Ascending aorta (tissue), 2 donors: ENCODE measurements at regions of chr6 and their contacts with region 1.

Region 1: DNA sequence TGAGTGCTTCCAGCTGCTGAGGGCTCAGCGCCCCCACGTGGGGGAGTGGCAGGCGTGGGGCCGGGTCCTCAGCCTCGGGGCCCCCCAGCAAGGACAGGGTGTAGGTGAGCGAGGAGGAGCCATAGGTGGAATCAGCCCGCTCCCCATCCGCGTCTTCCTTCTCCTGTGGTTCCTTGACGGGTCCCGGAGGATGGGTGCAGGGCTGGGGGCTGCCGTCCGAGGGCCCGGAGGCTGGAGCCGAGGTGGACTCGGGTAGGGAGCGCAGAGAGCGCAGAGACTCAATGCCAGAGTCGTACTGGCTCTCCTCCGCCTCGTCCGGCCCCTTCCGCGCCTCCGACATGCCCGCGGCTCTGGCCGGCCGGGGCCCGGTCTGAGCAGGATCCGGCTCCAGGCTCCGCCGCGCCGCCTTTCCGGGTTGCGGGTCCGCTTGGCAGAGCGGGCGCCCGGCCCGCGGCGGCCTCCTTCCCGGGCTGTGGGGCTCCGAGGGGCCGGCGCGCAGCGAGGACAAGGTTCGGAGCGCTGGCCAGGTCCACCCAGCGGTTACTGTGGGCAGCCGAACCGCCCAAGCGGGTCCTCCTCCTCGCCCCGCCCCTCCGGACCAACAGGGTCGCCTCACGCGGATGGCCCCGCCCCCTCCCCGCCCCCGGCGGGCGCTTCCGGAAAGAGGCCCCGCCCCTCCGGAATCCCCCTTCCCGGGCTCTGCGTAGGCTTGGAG is at the start of gene NFKBIE:
- DNase-seq: peak; percentile 88 to 98
- H3K4me3 ChIP-seq: peak within 1 kb of the TSS; percentile 69 to 73
- H3K27ac ChIP-seq: peak within 1 kb of the TSS; percentile 72 to 77
- H3K4me1 ChIP-seq: peaks cover 15 to 29% of the 10 kb centered on the region in 2 donors
- H3K27me3 ChIP-seq: peaks cover 2% of the 10 kb centered on the region
- CTCF ChIP-seq: peak in 1 of 3 experiments; percentile 26
- total RNA-seq, gene NFKBIE: 1.9 TPM

Region 2: DNA sequence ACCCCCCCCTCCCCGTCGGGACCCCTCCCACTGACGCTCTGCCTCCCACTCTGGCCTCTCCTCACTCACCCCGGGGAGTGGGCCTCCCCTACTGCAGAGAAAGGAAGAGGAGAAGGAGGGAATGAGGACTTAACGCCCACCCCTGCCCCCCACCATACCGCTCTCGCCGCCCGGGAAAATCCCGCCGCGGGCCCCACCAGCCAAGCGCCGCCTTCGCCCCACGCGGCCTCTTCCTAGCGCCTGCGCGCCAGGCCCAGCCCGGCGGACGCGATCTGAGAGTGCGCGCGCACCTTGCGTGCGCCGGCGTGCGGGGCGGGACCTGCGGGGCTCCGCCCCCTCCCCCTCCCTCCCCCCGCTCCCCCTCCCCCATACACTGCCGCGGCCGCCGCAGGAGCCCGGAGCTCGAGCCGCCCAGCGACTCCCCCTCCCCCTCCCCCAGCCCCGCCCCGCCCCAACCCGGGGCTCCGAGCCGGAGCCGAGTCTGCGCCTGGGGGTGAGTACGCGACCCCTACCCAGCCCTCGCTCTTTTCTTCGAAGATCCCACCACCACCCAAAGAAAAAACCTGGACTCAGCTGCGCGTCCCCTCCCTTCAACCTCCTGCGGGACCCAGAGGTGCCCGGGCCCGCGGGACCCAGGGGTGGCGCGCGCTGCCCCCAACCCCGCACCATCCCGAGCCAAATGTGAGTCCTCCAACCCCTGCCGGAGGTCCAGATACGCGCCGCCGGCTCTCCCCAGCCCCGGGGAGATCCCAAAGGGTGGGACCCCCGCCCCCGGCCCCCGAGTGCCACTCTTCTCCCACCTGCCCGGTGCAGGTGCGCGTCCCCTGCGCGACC is 137.8 kb before region 1 on chr6 and contains the starts of genes MRPL14 and TMEM63B:
- intact Hi-C with region 1: loop called (anchors 1 kb)
- DNase-seq: peak; percentile 43 to 91
- H3K4me3 ChIP-seq: peak within 1 kb of the TSS; percentile 85 to 86
- H3K27ac ChIP-seq: peak within 1 kb of the TSS; percentile 81 to 84
- H3K4me1 ChIP-seq: peaks cover 0 to 23% of the 10 kb centered on the region in 2 donors
- H3K27me3 ChIP-seq: no peaks in the 10 kb centered on the region
- CTCF ChIP-seq: no peak
- total RNA-seq, gene MRPL14: 61.8 TPM
- total RNA-seq, gene TMEM63B: 9.6 TPM

Region 3: GRCh38 chr6:44237813-44238433 is 27.2 kb before region 1 on chr6:
- intact Hi-C with region 1: loop called (anchors 1 kb)
- DNase-seq: peak; percentile 72 to 93
- H3K4me3 ChIP-seq: peak overlapping the region; percentile 51 to 79
- H3K27ac ChIP-seq: peak overlapping the region; percentile 97 to 100
- H3K4me1 ChIP-seq: peaks cover 25 to 50% of the 10 kb centered on the region in 2 donors
- H3K27me3 ChIP-seq: no peaks in the 10 kb centered on the region
- CTCF ChIP-seq: peak; percentile 97 to 99 (median 98)

Region 4: GRCh38 chr6:44312901-44313788 is 48.0 kb after region 1 on chr6 and contains the start of gene AARS2:
- intact Hi-C with region 1: loop called (anchors 5 kb)
- DNase-seq: peak; percentile 35 to 91
- H3K4me3 ChIP-seq: peak within 1 kb of the TSS; percentile 90 to 99
- H3K27ac ChIP-seq: peak within 1 kb of the TSS; percentile 52 to 76
- H3K4me1 ChIP-seq: peaks cover 0 to 5% of the 10 kb centered on the region in 2 donors
- H3K27me3 ChIP-seq: no peaks in the 10 kb centered on the region
- CTCF ChIP-seq: peak; percentile 92 to 98 (median 97)
- total RNA-seq, gene AARS2: 4.5 TPM

Region 5: DNA sequence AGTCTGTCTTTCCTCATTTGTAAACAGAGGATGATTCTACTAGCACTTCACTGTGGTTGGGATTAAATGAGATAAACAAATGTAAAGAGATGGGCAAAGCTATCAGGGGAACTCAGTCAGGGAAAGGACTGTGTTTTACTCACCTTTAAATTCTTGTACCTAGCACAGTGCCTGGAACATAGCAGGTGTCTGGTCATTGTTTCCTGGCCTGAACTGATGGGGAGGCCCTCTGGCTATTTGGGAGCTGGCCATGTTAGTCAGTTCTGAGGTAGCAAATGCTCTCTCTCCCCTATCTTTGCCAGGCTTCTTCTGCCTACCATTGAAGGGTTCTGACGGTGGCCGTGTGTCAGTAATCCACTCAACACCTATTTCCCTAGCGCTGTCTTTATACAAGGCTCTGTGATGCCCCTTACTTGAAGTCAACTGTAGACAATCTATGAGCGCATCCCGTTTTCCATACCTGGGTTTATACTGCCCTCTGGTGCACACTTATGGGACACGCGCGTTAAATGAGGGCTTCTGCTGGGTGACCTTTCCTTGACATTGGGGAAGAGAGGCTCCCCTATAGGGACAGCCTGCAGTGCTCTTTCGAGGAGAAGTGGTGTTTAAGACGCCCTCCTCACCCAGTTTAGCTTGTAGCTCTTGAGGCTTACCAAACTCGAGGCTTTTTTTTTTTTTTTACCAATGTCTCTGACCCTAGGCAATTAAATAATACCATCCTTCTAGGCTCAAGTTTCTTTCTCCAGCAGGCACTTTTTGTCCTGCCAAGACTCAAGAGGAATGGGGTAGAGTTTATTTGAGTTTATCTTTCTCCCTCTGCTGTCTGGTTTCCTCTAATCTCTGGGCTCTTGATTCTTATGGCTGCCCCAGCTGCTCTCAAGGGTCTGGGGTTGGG is 73.3 kb after region 1 on chr6:
- intact Hi-C with region 1: loop called (anchors 1 kb)
- DNase-seq: peak in 1 of 2 donors; percentile 76
- H3K4me3 ChIP-seq: no peak overlapping the region
- H3K27ac ChIP-seq: no peak overlapping the region
- H3K4me1 ChIP-seq: no peaks in the 10 kb centered on the region
- H3K27me3 ChIP-seq: peaks cover 3% of the 10 kb centered on the region
- CTCF ChIP-seq: peak; percentile 50 to 67 (median 55)

Region 6: GRCh38 chr6:44387346-44388133 is 122.4 kb after region 1 on chr6 and contains the start of gene CDC5L:
- intact Hi-C with region 1: loop called (anchors 5 kb)
- DNase-seq: peak; percentile 91 to 99
- H3K4me3 ChIP-seq: peak within 1 kb of the TSS; percentile 70 to 94
- H3K27ac ChIP-seq: peak within 1 kb of the TSS; percentile 89 to 91
- H3K4me1 ChIP-seq: peaks cover 0 to 17% of the 10 kb centered on the region in 2 donors
- H3K27me3 ChIP-seq: no peaks in the 10 kb centered on the region
- CTCF ChIP-seq: no peak
- total RNA-seq, gene CDC5L: 10.9 TPM

Region 7: GRCh38 chr6:44456070-44456965 is 191.2 kb after region 1 on chr6:
- intact Hi-C with region 1: loop called (anchors 5 kb)
- DNase-seq: no peak
- H3K4me3 ChIP-seq: peak overlapping the region; percentile 29 to 37
- H3K27ac ChIP-seq: peak overlapping the region in 1 of 2 donors; percentile 5
- H3K4me1 ChIP-seq: peaks cover 0 to 4% of the 10 kb centered on the region in 2 donors
- H3K27me3 ChIP-seq: no peaks in the 10 kb centered on the region
- CTCF ChIP-seq: peak; percentile 68 to 90 (median 87)